Transverse colon (tissue), 4 donors: ENCODE measurements at regions of chr3 and their contacts with region 1.

Region 1: DNA sequence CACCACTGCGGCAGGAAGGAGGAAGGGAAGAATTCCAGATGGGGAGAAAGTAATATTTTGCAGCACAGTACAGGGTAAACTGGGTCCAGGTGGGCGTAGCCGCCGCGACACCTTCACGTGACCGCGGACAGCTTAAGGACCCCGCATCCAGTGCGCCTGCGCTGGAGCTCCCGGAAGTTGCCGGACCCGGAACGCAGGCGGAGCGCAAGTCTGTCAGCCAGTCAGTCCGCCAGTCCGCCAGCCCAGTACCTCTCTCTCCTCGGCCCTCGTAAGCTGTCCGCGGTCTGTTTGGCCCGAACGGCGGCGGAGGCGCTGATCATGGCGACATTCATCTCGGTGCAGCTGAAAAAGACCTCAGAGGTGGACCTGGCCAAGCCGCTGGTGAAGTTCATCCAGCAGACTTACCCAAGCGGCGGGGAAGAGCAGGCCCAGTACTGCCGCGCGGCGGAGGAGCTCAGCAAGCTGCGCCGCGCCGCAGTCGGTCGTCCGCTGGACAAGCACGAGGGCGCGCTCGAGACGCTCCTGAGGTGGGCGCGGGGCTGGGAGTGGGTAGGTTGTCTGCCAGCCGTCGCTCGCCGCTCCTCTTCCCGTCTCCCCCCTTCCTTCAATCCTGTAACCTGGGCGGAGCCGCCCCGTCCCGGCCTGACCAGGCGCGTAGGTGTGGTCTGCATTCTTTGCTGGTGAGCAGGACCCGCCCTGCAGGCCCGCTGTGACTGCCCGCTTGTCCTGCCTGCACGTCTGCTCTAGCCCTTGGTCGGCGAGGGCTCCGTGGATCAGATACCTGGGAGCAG is at the start of gene PDCD6IP:
- DNase-seq: peak; percentile 95
- H3K4me3 ChIP-seq: peak within 1 kb of the TSS; percentile 55 to 84 (median 75)
- H3K27ac ChIP-seq: peak within 1 kb of the TSS; percentile 91 to 98 (median 97)
- H3K4me1 ChIP-seq: peaks cover 9 to 51% (median 37%) of the 10 kb centered on the region in 4 donors
- H3K27me3 ChIP-seq: no peaks in the 10 kb centered on the region
- CTCF ChIP-seq: peak in 3 of 5 experiments; percentile 14 to 44 (median 33)
- EP300 ChIP-seq: no peak
- POLR2A ChIP-seq: peak; percentile 99
- total RNA-seq, gene PDCD6IP: 89.0 to 523 (median 372) TPM

Region 2: GRCh38 chr3:33113772-33114621 is 684.6 kb before region 1 on chr3 and contains the start of gene CRTAP:
- in situ Hi-C with region 1: loop called in 1 of 4 experiments (anchors 25 kb)
- intact Hi-C with region 1: no loop called
- DNase-seq: peak; percentile 98
- H3K4me3 ChIP-seq: peak within 1 kb of the TSS; percentile 42 to 87 (median 74)
- H3K27ac ChIP-seq: peak within 1 kb of the TSS; percentile 97 to 100 (median 97)
- H3K4me1 ChIP-seq: peaks cover 0 to 30% (median 12%) of the 10 kb centered on the region in 4 donors
- H3K27me3 ChIP-seq: no peaks in the 10 kb centered on the region
- CTCF ChIP-seq: peak in 1 of 5 experiments; percentile 20
- EP300 ChIP-seq: no peak
- POLR2A ChIP-seq: peak; percentile 66
- total RNA-seq, gene CRTAP: 71.1 to 138 (median 88.8) TPM

Region 3: DNA sequence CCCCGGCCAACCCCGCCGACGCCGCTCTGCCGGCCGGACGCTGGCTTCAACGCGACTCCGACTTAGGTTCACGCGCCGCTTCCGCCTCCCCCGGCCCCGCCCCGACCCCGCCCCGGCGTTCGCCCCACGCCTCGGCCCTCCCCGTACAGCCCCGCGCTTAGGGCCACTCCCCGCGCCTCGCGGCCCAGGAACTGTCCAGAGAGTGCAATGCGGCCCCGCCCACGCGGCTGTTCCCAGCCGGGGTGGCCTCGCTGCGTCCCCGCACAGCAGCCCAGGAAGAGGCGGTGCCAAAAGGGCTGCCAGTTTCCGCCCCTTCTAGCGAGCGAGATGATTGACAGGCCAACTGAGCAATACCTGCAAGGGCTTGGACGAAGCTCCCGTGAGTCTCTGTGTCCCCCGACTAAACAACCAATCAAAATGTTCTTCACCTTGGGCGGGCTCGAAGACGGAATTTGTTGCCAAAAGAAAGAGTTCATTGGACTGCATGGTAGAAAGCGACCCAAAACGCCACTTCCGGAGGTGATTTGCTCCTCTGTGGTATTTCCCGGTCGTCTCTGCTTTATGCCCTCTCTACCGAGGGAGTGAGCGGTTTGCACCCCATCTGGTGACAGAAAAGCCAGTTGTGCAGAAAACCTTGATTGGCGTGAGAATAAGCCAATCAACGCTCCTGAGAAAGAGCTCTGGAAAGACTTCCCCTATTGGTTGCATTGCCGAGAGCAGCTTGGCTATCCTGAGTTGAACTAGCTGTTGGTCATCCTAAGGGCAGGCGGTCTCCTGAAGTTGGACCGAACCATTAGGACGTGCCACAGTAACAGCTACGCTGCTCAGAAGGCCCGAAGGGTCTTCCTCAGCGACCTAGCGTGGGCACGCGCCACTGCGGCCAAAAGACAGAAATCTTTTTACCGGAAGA is 358.0 kb before region 1 on chr3 and contains the start of gene UBP1:
- in situ Hi-C with region 1: loop called in 2 of 4 experiments (anchors 25 kb)
- intact Hi-C with region 1: no loop called
- DNase-seq: peak; percentile 100
- H3K4me3 ChIP-seq: peak within 1 kb of the TSS; percentile 68 to 83 (median 78)
- H3K27ac ChIP-seq: peak within 1 kb of the TSS; percentile 98 to 99 (median 98)
- H3K4me1 ChIP-seq: peaks cover 24 to 44% (median 32%) of the 10 kb centered on the region in 4 donors
- H3K27me3 ChIP-seq: no peaks in the 10 kb centered on the region
- CTCF ChIP-seq: peak in 1 of 5 experiments; percentile 22
- EP300 ChIP-seq: no peak
- POLR2A ChIP-seq: peak; percentile 92
- total RNA-seq, gene UBP1: 65.9 to 180 (median 86.1) TPM

Region 4: DNA sequence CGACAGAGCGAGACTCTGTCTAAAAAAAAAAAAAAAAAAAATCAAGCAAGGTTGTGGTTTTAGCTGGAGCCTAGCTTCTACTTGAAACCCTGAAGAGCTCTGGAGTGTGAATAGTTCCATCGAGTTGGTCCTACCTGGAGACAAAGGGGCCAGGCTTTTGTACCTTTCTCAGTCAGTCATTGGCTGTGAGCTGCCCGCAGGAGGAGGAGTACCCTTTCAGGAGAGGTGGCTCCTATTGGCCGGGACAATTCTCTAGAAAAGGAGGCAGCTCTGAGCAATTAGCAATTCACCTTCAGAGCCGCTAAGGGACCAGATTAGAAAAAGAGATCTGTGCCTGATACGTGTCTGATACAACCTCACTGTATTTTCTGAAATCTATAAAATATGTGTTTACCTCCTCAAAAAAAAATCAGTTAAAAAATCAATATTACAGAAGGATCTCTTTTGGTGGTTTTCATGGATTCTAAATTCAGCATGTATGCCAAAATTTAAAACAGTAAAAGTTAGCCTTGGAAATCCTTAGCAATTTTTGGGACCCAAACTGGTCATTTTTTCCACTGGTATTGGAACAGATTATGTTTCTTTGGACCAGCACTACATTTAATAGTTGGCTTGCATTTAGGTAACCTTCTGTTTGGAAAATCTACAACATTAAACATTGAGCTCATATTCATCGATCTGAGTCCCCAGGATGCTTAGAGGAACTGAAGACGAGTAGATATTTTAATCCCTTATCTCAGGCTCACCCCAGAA is 29.9 kb before region 1 on chr3:
- in situ Hi-C with region 1: no loop called
- intact Hi-C with region 1: no loop called
- DNase-seq: no peak
- H3K4me3 ChIP-seq: no peak overlapping the region
- H3K27ac ChIP-seq: no peak overlapping the region
- H3K4me1 ChIP-seq: no peaks in the 10 kb centered on the region
- H3K27me3 ChIP-seq: no peaks in the 10 kb centered on the region
- CTCF ChIP-seq: no peak
- EP300 ChIP-seq: no peak
- POLR2A ChIP-seq: no peak

Region 5: DNA sequence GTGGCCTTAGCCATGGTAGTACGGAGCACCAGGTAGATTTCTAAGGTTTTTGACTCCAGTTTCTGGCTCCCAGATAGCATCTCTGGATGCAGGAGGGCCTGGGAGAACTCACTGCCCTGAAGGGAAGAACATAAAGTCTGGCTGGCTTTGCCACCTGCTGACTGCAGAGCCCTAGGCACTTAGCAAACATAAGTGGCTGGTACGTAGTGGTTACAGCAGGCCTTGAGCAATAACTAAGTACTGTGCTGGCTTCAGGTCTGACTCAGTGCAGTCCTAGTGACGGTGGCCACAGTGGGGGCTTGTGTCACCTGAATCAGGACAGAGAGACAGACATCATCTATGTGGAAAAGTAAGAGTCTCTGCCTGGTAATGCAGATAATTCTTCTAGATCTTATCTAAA is 870.9 kb after region 1 on chr3:
- in situ Hi-C with region 1: no loop called
- intact Hi-C with region 1: no loop called
- DNase-seq: no peak
- H3K4me3 ChIP-seq: no peak overlapping the region
- H3K27ac ChIP-seq: no peak overlapping the region
- H3K4me1 ChIP-seq: no peaks in the 10 kb centered on the region
- H3K27me3 ChIP-seq: no peaks in the 10 kb centered on the region
- CTCF ChIP-seq: no peak
- EP300 ChIP-seq: no peak
- POLR2A ChIP-seq: no peak